BJ (cell line): ENCODE measurements at regions of chr7 and their contacts with region 1.

Region 1: DNA sequence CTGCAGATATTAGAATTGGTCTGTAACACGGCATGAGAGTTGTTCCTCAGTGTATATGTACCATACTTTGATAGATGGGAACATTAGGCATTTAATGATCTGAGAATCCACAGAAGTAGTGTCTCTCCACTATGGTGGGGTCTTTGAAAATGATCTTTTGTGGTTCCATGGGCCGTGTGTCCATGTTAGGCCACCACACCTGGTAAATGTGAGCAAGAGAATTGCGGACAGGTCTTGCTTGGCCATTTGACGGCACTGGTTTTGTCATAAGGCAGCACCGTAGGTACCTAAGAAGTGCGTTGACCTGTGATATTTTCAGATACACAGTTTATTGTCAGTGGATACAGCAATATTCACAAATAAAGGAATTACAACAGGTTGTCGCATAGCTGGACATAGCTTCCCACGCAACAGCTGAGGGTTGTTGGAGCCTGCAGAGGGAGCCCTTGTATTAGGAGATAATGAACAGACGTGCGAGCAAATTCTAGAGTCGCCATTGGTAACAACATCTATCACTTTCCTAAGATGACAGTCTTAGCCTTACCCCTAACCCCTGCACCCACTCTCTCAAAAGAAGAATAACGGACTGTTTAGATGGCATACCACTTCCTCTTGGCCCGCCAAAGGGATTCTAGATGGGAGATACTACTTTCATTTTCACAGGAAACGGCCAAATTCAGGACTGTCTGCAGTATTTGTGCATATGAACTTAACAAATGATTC is 111.4 kb downstream of the COL28A1 start:
- DNase-seq: no peak
- H3K4me3 ChIP-seq: peak overlapping the region; percentile 41
- H3K27me3 ChIP-seq: no peaks in the 10 kb centered on the region
- CTCF ChIP-seq: peak; percentile 89

Region 2: DNA sequence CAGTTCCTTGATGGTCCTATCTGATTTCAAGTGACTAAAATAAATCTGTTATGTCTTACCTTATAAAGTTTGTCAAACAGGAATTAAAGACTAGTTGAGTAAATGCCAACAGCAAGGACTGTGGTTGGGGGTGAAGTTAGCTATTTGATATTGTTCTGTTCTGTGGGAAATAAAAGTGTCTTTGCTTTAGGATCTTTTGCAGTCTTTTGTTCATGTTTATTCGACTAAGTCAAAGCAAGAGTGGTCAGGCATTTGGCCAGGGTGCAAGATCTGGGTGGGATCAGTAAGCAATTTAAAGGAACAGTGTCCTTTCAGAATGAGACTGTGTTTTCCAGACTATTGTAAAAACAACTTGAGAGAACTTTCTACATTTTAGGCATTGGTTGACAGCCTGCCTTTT is 111.4 kb after region 1 on chr7 and contains the start of gene COL28A1:
- CTCF ChIA-PET with region 1: interaction called, 163 read pairs
- POLR2A ChIA-PET with region 1: no interaction called
- DNase-seq: no peak
- H3K4me3 ChIP-seq: no peak within 1 kb of the TSS
- H3K27me3 ChIP-seq: no peaks in the 10 kb centered on the region
- CTCF ChIP-seq: no peak
- polyA plus RNA-seq, gene COL28A1: 0.04 and 0.11 TPM in 2 replicates

Region 3: DNA sequence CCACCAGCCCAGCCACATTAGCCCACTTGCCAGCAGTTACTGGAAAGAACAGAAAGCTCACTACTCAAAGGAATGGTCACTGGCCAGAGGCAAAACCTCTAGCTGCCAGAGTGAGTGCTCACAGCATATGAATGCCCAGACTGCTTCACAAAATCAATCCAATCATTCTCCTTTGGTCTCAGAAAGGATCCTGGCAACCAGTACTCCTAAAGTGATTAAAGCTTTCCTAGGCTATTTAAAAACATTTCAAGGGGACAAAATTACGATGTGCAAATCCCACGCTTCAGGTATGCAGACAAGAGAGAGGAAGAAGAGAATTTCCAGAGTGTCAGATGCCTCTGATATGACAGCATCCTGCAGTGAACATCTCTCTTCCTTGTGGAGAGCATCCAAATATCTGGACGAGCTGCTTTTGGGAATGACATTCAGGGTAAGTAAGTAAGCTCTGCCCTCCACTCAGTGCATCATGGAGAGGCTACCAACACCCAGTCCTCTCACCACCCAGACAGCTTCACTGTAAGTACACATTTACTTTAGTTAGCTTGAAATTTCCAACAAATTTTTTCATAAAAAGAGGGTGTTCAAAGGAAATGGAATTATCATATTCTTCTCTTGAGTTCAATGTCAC is 812.6 kb after region 1 on chr7:
- CTCF ChIA-PET with region 1: no interaction called
- POLR2A ChIA-PET with region 1: no interaction called
- DNase-seq: no peak
- H3K4me3 ChIP-seq: no peak overlapping the region
- H3K27me3 ChIP-seq: no peaks in the 10 kb centered on the region
- CTCF ChIP-seq: no peak